ENCODE measurements at regions of chr3 and their contacts with region 1.

Region 1: GRCh38 chr3:81980596-81981494 is 219.4 kb upstream of the GBE1 start:
- DNase-seq: no peak
- ATAC-seq: no peak
- H3K4me3 ChIP-seq: no peak overlapping the region
- H3K27ac ChIP-seq: no peak overlapping the region
- H3K4me1 ChIP-seq: no peaks in the 10 kb centered on the region
- H3K27me3 ChIP-seq: no peaks in the 10 kb centered on the region
- CTCF ChIP-seq: no peak

Region 2: DNA sequence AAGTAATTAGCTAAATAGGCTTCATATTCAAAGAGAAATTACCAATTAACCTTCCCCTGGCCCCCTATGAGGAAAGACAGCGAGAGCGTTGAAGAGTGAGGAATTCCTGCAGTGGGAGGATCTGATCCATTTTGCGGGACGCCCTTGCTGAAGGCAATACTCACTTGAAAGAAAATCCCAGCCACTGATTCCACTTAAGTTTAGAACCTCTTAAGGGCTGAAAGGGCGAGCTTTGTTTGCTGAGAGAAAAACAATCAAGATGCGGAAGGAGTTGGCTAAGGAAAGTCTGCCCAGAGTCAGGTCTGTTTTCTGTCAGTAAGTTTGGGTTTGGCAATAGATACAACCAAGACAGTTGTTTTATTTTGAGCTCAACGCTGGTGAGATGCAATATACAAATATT is 116.6 kb before region 1 on chr3:
- intact Hi-C with region 1: loop called in 1 of 2 experiments (anchors 10 kb)
- DNase-seq: no peak
- ATAC-seq: no peak
- H3K4me3 ChIP-seq: no peak overlapping the region
- H3K27ac ChIP-seq: no peak overlapping the region
- H3K4me1 ChIP-seq: no peaks in the 10 kb centered on the region
- H3K27me3 ChIP-seq: no peaks in the 10 kb centered on the region
- CTCF ChIP-seq: no peak

Region 3: DNA sequence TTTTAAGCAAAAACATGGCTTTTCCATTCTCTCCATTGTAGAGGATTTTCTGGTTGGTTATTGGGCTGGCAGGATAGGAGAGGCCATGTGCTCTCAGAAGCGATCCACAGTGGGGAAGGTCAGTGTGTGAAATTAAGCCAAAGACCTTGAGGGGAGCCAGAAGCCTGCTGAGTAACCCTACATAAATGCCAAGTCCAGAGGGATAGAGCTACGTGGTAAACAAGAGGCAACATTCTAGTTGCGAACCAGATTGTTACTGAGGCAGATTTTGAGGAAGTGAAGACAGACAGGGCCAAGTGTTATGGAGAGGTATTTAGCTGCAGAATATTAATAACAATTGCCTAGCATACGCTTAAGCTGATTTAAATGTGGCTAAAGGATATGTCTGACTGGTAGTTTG is 373.4 kb after region 1 on chr3:
- intact Hi-C with region 1: no loop called
- DNase-seq: no peak
- ATAC-seq: no peak
- H3K4me3 ChIP-seq: no peak overlapping the region
- H3K27ac ChIP-seq: no peak overlapping the region
- H3K4me1 ChIP-seq: no peaks in the 10 kb centered on the region
- H3K27me3 ChIP-seq: no peaks in the 10 kb centered on the region
- CTCF ChIP-seq: no peak